Pancreas (tissue), 10 donors: ENCODE measurements at regions of chr14 and their contacts with region 1.

Region 1: DNA sequence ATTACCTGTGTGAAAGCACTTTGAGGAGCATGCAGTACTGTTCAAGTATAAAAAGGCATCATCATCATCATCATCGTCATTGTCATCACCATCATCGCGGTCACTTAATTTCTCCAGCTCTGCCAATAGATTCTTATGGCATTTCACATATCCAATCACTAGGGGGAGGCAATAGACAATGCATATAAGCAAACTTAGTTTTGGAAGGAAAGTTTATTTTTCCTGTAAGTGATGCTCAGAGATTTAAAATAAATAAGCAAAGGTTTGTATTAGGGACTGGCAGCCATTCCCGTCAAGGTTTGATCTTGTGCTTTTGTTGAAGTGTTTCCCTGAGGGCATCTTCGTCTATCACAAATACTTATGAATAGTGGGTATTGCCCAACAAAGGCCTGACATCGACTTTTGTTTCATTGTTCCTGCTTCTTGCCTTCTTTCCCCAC is 127.4 kb downstream of the KTN1 start:
- DNase-seq: no peak
- ATAC-seq: peak; percentile 47 to 71 (median 68)
- H3K4me3 ChIP-seq: no peak overlapping the region
- H3K27ac ChIP-seq: no peak overlapping the region
- H3K4me1 ChIP-seq: peaks cover 0 to 6% (median 0%) of the 10 kb centered on the region in 3 donors
- H3K27me3 ChIP-seq: no peaks in the 10 kb centered on the region
- CTCF ChIP-seq: peak in 3 of 4 donors; percentile 35 to 43 (median 37)

Region 2: DNA sequence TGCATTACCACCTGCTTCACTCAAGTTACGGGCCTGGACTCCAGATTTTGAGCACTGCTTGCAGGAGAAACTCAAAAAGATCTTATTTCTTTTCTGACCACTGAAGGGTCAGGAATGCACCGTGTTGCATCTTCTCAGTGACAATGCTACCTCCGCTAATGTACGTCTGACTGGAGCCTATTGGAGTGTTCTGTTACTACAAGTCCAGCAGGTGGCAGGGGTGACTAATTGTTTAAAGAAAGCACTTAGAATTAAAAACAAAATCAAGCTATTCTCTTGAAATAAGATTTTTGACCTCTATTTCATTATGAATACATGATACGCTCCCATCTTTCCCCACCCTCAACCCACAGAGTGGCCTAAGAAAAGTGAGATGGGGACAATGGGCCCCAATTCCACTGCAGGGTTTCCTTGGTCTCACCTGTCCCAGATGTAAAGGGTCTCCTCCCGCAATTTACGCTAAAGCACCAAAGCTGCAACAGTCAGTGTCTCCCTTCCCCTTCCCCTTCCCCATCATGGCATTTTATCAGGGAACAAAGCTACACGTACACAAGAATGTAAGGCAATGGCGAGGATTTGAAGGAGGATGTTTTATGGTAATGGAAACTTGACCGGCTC is 269.2 kb before region 1 on chr14:
- intact Hi-C with region 1: no loop called
- DNase-seq: no peak
- ATAC-seq: peak in 3 of 4 donors; percentile 74 to 82 (median 75)
- H3K4me3 ChIP-seq: no peak overlapping the region
- H3K27ac ChIP-seq: no peak overlapping the region
- H3K4me1 ChIP-seq: no peaks in the 10 kb centered on the region
- H3K27me3 ChIP-seq: no peaks in the 10 kb centered on the region
- CTCF ChIP-seq: peak; percentile 16 to 29 (median 28)

Region 3: DNA sequence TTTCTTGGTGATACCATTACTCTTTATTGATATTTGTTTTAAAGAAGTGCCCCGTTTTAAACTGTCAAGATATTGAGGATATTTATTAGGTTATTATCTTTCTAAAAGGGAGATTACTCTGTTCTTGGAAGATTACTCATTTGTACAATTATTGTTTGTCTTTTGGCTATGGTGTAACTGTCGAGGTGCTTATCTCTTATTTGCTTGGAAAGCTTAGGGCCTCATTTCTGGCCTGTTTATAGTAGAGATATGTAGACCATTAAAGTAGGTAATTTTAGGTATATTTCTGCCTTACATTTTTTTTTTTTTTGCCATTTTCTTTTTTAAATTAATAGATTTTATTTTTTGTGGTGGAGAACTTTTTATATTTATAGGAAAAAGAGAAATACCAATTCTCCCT is 53.1 kb before region 1 on chr14:
- intact Hi-C with region 1: no loop called
- DNase-seq: no peak
- ATAC-seq: peak; percentile 50 to 77 (median 68)
- H3K4me3 ChIP-seq: no peak overlapping the region
- H3K27ac ChIP-seq: no peak overlapping the region
- H3K4me1 ChIP-seq: peaks cover 3 to 11% (median 4%) of the 10 kb centered on the region in 3 donors
- H3K27me3 ChIP-seq: no peaks in the 10 kb centered on the region
- CTCF ChIP-seq: no peak

Region 4: GRCh38 chr14:55846826-55847446 is 139.6 kb after region 1 on chr14:
- intact Hi-C with region 1: no loop called
- DNase-seq: no peak
- ATAC-seq: peak in 3 of 4 donors; percentile 42 to 56 (median 55)
- H3K4me3 ChIP-seq: no peak overlapping the region
- H3K27ac ChIP-seq: no peak overlapping the region
- H3K4me1 ChIP-seq: no peaks in the 10 kb centered on the region
- H3K27me3 ChIP-seq: no peaks in the 10 kb centered on the region
- CTCF ChIP-seq: no peak

Region 5: DNA sequence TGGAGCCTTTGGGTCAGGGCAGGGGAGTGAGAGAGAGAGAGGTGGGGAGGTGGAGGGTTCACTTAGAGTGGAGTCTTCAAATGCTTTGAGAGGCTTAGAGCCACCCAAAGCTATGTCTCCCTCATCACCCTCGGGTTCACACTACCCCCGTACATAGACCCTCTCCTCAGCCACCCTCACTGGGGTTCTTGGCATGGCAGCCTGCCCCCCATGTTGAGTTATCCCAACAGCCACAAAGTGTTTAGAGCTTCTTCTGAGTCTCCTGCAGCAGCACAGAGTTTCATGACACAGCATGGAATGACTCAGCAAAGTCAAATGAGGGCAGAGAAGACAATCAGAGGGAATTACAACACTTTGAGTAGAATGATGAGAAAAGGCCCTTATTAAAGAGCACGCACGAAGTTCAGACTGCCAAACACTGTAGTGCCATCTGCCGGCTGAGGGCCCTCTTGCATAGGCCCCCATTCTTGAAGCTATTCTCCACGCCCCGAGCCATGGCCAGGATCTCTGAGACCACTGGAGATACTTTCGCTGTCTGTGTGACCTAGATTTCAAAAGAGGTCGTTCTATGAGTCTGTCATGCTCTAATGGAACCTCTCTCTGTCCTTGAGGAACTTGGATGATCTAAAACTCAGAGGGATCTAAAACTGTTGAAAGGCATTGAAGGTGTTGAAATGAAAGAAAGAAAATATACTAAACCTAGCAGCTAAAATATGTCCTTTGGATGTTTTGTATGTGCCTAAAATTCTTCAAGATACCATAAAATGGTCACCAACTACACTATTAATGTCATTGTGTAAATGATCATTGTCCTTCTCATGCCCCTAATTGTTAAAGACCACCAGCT is 632.7 kb after region 1 on chr14:
- intact Hi-C with region 1: loop called in 1 of 3 experiments (anchors 10 kb)
- DNase-seq: peak in 5 of 6 donors; percentile 26 to 61 (median 46)
- ATAC-seq: peak; percentile 58 to 93 (median 90)
- H3K4me3 ChIP-seq: no peak overlapping the region
- H3K27ac ChIP-seq: no peak overlapping the region
- H3K4me1 ChIP-seq: no peaks in the 10 kb centered on the region
- H3K27me3 ChIP-seq: no peaks in the 10 kb centered on the region
- CTCF ChIP-seq: peak; percentile 24 to 55 (median 36)